Posterior vena cava (tissue), 2 donors: ENCODE measurements at regions of chr19 and their contacts with region 1.

Region 1: GRCh38 chr19:1447944-1448343 is 2.0 kb upstream of the APC2 start:
- DNase-seq: no peak

Region 2: DNA sequence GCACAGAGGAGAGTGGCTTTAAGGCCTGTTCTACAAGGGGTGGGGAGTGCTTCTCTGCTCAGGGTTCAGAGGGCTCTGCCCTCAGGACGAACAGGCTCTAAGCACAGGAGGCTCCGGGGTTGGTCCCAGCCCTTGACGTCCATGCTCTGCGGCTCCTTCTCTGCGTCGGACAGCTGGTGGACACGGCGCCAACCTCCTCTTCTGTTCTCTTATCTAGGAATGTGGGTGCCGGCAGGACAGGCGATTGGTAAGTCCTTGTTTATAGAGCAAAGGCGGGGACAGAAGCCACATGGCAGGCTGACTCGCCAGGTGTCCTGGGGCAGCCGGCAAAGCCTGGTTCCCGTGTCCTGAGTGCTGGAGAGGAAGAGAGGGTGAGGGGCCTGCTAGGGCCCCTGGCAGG is 18.2 kb before region 1 on chr19:
- intact Hi-C with region 1: no loop called
- DNase-seq: no peak

Region 3: DNA sequence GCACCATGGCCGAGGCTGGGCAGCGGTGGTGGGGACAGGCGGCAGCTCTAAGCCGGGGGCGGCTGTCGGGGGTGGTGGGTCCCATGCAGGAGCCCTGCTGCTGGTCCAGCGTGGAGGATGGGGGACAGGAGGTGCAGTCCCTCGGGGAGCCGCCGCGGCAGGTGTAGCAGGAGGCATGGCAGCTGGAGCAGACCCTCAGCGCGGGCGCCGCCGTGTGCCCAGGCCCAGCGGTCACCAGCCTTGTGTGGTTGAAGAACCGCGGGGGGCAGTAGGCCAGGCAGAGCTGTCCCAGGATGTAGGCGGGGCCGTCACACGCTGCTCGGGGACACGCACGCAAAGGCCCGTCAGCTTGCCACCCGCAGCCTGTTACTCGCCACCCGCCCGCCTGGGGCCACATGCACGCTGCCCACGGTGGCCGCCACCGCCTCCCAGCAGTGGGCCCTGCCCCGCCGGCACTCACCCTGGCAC is 34.0 kb after region 1 on chr19:
- intact Hi-C with region 1: loop called in 1 of 2 experiments (anchors 1 kb)
- DNase-seq: peak; percentile 78